ENCODE measurements at regions of chr12 and their contacts with region 1.

Region 1: DNA sequence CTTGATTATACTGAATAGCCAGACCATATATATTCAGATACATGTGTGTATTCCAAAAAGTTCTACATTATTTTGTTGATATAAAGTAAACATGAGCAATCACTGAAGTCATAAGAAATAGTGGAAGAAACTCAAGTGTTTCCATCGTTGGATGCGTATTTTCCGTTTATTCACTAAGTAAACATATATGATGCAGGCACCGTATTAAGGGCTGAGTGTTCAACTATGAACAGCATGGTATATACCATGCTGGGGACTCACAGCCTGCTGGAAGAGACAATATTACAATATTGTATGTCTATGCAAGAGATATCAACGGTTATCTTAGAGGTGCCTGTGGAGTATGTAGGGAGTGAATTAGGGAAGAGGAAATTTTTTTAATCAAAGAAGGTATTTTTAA is 1.2 kb downstream of the PYROXD1 start:
- DNase-seq: no peak
- ATAC-seq: no peak
- H3K4me3 ChIP-seq: peak overlapping the region; percentile 91
- H3K4me3 Mint-ChIP-seq: peak overlapping the region; percentile 94 to 99 (median 98)
- H3K27ac ChIP-seq: peak overlapping the region; percentile 81
- H3K27ac Mint-ChIP-seq: peak overlapping the region; percentile 92 to 99 (median 97)
- H3K4me1 ChIP-seq: peaks cover 11 to 22% of the 10 kb centered on the region in 2 donors
- H3K4me1 Mint-ChIP-seq: peaks cover 32 to 72% (median 49%) of the 10 kb centered on the region in 7 donors
- H3K27me3 ChIP-seq: no peaks in the 10 kb centered on the region
- H3K27me3 Mint-ChIP-seq: peaks cover 0 to 10% (median 0%) of the 10 kb centered on the region in 5 donors

Region 2: DNA sequence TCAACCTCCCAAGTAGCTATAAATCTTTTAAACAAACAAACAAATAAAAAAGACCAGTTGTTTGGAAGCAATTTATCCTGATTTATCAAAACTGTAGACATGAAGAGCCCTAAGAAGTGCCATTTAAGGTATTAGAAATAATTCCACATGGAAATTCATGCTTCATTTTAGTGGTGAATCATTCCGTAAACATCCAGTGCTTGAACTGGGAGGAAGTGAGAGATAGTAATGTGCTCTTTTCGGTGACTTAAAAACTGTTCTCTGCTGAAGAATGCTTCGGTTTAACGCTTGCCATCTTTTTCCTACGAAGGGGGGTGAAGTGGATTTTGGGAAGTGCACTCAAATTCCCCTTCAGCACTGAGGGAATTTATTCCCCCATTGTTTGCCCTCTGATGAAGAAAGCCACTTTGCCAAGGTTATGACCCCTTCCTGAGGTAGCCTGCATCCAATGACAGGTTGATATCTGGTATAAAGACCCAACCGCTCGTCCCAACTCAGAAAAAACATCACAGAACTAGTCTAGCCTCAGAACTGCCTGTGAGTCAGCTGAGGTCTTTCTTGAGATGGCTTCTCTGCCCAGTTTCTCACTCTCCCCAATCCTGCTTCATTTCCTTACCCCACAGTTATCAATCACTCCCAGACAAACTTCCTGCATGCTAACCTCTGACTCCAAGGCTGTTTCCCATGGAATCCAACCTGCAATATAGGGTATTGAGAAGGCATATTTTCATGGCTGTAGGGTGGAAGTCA is 1755.3 kb before region 1 on chr12:
- CTCF ChIA-PET with region 1: no interaction called
- POLR2A ChIA-PET with region 1: no interaction called
- intact Hi-C with region 1: loop called in 1 of 2 experiments (anchors 2 kb)
- DNase-seq: no peak
- ATAC-seq: no peak
- H3K4me3 ChIP-seq: no peak overlapping the region
- H3K4me3 Mint-ChIP-seq: no peak overlapping the region
- H3K27ac ChIP-seq: no peak overlapping the region
- H3K27ac Mint-ChIP-seq: no peak overlapping the region
- H3K4me1 ChIP-seq: peaks cover 4 to 8% of the 10 kb centered on the region in 2 donors
- H3K4me1 Mint-ChIP-seq: peaks cover 10 to 35% (median 27%) of the 10 kb centered on the region in 7 donors
- H3K27me3 ChIP-seq: no peaks in the 10 kb centered on the region
- H3K27me3 Mint-ChIP-seq: peaks cover 0 to 19% (median 0%) of the 10 kb centered on the region in 5 donors

Region 3: GRCh38 chr12:21451529-21451928 is 12.9 kb after region 1 on chr12:
- CTCF ChIA-PET with region 1: interaction called, 5 read pairs
- POLR2A ChIA-PET with region 1: interaction called, 11 read pairs
- intact Hi-C with region 1: loop called (anchors 1 kb)
- DNase-seq: no peak
- ATAC-seq: no peak
- H3K4me3 ChIP-seq: no peak overlapping the region
- H3K4me3 Mint-ChIP-seq: no peak overlapping the region
- H3K27ac ChIP-seq: no peak overlapping the region
- H3K27ac Mint-ChIP-seq: peak overlapping the region in 4 of 9 donors; percentile 6 to 51 (median 28)
- H3K4me1 ChIP-seq: peaks cover 2 to 21% of the 10 kb centered on the region in 2 donors
- H3K4me1 Mint-ChIP-seq: peaks cover 2 to 48% (median 29%) of the 10 kb centered on the region in 7 donors
- H3K27me3 ChIP-seq: no peaks in the 10 kb centered on the region
- H3K27me3 Mint-ChIP-seq: no peaks in the 10 kb centered on the region

Region 4: GRCh38 chr12:21607701-21608100 is 169.1 kb after region 1 on chr12:
- CTCF ChIA-PET with region 1: no interaction called
- POLR2A ChIA-PET with region 1: interaction called, 3 read pairs
- intact Hi-C with region 1: loop called in 1 of 2 experiments (anchors 5 kb)
- DNase-seq: peak in 6 of 9 donors; percentile 14 to 57 (median 43)
- ATAC-seq: no peak
- H3K4me3 ChIP-seq: no peak overlapping the region
- H3K4me3 Mint-ChIP-seq: no peak overlapping the region
- H3K27ac ChIP-seq: no peak overlapping the region
- H3K27ac Mint-ChIP-seq: no peak overlapping the region
- H3K4me1 ChIP-seq: peaks cover 0 to 10% of the 10 kb centered on the region in 2 donors
- H3K4me1 Mint-ChIP-seq: peaks cover 2 to 8% (median 7%) of the 10 kb centered on the region in 7 donors
- H3K27me3 ChIP-seq: no peaks in the 10 kb centered on the region
- H3K27me3 Mint-ChIP-seq: peaks cover 0 to 7% (median 0%) of the 10 kb centered on the region in 5 donors

Region 5: DNA sequence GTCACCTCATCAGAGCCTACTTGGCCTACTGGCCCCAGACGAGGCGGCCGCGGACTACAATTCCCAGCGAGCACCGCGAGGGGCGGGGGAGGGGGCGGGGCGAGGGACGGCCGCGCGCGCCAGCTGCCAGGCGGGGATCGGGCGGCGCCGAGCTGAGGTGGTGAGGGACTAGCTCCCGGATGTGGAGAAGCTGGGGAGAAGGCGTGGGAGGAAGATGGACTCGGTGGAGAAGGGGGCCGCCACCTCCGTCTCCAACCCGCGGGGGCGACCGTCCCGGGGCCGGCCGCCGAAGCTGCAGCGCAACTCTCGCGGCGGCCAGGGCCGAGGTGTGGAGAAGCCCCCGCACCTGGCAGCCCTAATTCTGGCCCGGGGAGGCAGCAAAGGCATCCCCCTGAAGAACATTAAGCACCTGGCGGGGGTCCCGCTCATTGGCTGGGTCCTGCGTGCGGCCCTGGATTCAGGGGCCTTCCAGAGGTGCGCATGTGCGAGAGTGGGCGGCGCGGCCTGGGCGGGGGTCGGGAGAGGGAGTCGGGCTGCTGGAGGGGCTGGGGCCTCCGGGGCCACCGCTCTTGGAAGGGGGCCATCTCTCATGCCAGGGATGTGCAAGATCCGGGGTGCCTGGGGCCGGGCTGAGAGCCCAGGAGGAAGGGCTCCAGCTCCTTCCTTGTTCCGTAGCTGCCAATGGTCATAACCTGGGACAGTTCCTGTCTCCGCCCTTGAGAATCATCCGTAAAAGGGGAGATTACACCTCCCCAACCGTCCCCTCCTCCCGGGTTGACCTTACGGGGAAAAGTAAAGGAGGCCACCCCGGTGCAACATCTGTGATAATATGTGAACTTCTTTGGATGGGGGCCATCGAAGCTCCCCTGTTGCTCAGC is 607.7 kb after region 1 on chr12 and contains the start of gene CMAS:
- CTCF ChIA-PET with region 1: no interaction called
- POLR2A ChIA-PET with region 1: no interaction called
- intact Hi-C with region 1: loop called (anchors 1 to 5 kb)
- DNase-seq: peak; percentile 49 to 76 (median 65)
- ATAC-seq: peak; percentile 93
- H3K4me3 ChIP-seq: peak within 1 kb of the TSS; percentile 82
- H3K4me3 Mint-ChIP-seq: peak within 1 kb of the TSS; percentile 80 to 99 (median 94)
- H3K27ac ChIP-seq: peak within 1 kb of the TSS; percentile 82
- H3K27ac Mint-ChIP-seq: peak within 1 kb of the TSS; percentile 35 to 95 (median 89)
- H3K4me1 ChIP-seq: peaks cover 10 to 15% of the 10 kb centered on the region in 2 donors
- H3K4me1 Mint-ChIP-seq: peaks cover 27 to 65% (median 48%) of the 10 kb centered on the region in 7 donors
- H3K27me3 ChIP-seq: no peaks in the 10 kb centered on the region
- H3K27me3 Mint-ChIP-seq: no peaks in the 10 kb centered on the region
- total RNA-seq, gene CMAS: 10.1 to 33.6 (median 19.4) TPM

Region 6: GRCh38 chr12:22544038-22544979 is 1105.7 kb after region 1 on chr12 and contains the start of gene C2CD5:
- CTCF ChIA-PET with region 1: no interaction called
- POLR2A ChIA-PET with region 1: no interaction called
- intact Hi-C with region 1: loop called in 1 of 2 experiments (anchors 1 kb)
- DNase-seq: peak; percentile 84 to 96 (median 96)
- ATAC-seq: peak; percentile 96
- H3K4me3 ChIP-seq: peak within 1 kb of the TSS; percentile 95
- H3K4me3 Mint-ChIP-seq: peak within 1 kb of the TSS; percentile 91 to 98 (median 92)
- H3K27ac ChIP-seq: peak within 1 kb of the TSS; percentile 79
- H3K27ac Mint-ChIP-seq: peak within 1 kb of the TSS; percentile 94 to 98 (median 95)
- H3K4me1 ChIP-seq: peaks cover 7 to 18% of the 10 kb centered on the region in 2 donors
- H3K4me1 Mint-ChIP-seq: peaks cover 32 to 47% (median 38%) of the 10 kb centered on the region in 7 donors
- H3K27me3 ChIP-seq: no peaks in the 10 kb centered on the region
- H3K27me3 Mint-ChIP-seq: peaks cover 0 to 12% (median 4%) of the 10 kb centered on the region in 5 donors
- total RNA-seq, gene C2CD5: 31.5 to 58.9 (median 47.1) TPM

Measured in naive thymus-derived CD4-positive, alpha-beta T cell (primary cell).